OCI-LY7 (cell line): ENCODE measurements at regions of chr22 and their contacts with region 1.

Region 1: DNA sequence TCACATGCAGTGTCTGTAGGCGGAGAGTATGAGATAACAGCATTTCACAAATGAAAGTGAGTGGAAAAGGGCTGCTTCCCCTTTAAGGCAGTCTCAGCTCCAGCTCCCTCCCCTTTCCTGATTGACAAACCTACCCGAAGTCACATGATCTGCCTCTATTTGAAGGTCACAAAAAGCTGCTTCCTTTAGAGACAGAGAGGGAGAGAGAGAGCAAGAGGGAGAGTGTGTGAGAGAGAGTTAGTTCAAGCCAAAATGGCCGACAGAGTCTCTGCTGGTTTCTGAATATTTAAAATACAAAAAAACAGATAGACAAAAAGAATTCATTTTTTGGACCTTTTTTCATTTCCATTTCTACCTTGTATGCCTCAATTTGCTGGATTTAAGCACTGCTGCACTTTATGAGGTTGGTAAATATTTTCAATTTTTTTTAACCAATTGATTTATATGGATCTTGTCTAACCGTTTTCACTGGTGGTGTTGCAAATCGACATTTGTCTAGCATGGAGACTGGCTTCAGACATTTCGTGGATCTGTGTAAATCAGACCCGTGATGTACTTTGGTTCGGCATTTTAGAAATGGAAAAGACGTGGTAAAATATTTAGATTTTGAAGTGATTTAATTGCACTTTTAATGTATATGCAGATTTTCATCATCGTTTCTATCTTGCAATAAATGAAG is at the start of gene TNRC6B:
- DNase-seq: peak; percentile 96
- H3K4me3 ChIP-seq: peak within 1 kb of the TSS; percentile 91
- H3K27ac ChIP-seq: peak within 1 kb of the TSS; percentile 94
- H3K4me1 ChIP-seq: peaks cover 40% of the 10 kb centered on the region
- CTCF ChIP-seq: no peak
- total RNA-seq, gene TNRC6B: 28.4 and 37.0 TPM in 2 replicates

Region 2: DNA sequence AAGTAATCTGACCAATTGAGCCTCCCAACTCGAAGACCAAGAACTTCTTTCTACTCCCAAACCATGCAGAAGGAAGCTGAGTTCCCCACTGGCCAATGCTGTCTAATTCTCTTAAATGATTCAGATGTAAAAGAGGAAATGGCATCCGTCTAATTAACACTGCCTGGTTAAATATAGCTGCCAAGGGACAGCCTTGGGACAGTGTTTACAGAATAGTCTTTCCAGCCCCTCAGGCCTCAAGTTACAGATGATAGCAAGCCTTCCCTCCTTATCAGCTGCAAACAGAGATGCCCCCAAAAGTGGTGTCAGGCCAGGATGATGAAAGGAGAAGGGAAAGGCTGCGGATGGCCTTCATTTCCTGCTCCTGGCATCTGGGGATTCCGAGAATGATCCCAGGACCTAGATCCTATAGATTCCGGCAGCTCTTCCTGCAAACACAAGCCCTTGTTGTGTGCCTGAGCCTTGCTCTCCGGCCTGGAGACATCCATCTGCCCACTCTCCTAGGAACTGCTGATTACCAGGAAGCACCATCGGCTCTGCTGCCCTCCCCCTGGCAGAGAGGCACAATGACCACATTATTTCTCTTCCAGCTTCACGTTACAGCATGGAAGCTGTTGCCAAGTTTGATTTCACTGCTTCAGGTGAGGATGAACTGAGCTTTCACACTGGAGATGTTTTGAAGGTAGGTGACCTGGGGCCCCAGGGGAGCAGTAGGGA is 231.2 kb before region 1 on chr22:
- CTCF ChIA-PET with region 1: no interaction called
- POLR2A ChIA-PET with region 1: no interaction called
- intact Hi-C with region 1: no loop called
- DNase-seq: peak; percentile 34
- H3K4me3 ChIP-seq: peak overlapping the region; percentile 13
- H3K27ac ChIP-seq: peak overlapping the region; percentile 15
- H3K4me1 ChIP-seq: peaks cover 55% of the 10 kb centered on the region
- CTCF ChIP-seq: no peak

Region 3: DNA sequence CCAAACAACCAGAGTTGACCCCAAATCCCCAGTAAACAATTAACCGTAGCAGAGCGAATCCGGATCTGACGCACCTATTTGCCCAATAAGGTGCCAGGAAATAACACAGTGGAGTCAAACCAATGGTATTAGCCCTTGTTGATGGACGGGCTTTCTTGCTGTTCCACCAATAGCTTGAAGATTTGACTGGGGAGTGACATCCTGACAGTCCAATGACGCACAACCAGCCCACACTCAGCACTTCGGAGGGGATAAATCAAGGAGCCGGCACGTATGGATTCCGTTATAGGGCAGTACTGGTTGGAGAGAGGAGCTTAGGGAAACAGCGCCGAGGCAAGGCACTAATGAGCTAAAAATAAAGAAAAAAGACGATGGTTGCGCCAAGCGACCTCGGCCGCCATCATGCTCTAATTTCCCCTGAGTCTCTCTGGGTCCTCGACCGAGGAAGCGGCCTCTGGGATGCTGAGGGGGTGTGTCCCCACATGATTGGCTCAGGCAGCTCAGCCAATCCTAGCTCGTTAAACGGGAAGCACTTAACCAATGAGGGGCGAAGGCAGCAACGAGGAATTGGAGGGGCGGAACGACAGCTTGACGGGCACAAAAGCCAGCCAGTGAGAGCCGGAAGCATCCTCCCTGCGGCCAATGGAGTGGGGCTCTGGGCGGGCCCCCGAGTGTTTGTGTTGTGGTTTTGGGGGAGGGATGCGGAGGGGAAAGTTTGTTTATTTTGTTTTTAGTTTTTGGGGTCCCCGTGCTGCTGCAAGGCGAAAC is 133.6 kb before region 1 on chr22:
- CTCF ChIA-PET with region 1: no interaction called
- POLR2A ChIA-PET with region 1: interaction called, 10 read pairs
- intact Hi-C with region 1: loop called (anchors 1 kb)
- DNase-seq: peak; percentile 100
- H3K4me3 ChIP-seq: peak overlapping the region; percentile 70
- H3K27ac ChIP-seq: peak overlapping the region; percentile 65
- H3K4me1 ChIP-seq: peaks cover 42% of the 10 kb centered on the region
- CTCF ChIP-seq: no peak

Region 4: GRCh38 chr22:40050258-40050657 is 127.6 kb before region 1 on chr22:
- CTCF ChIA-PET with region 1: no interaction called
- POLR2A ChIA-PET with region 1: interaction called, 5 read pairs
- intact Hi-C with region 1: loop called (anchors 1 kb)
- DNase-seq: peak; percentile 96
- H3K4me3 ChIP-seq: peak overlapping the region; percentile 52
- H3K27ac ChIP-seq: peak overlapping the region; percentile 95
- H3K4me1 ChIP-seq: peaks cover 86% of the 10 kb centered on the region
- CTCF ChIP-seq: no peak

Region 5: DNA sequence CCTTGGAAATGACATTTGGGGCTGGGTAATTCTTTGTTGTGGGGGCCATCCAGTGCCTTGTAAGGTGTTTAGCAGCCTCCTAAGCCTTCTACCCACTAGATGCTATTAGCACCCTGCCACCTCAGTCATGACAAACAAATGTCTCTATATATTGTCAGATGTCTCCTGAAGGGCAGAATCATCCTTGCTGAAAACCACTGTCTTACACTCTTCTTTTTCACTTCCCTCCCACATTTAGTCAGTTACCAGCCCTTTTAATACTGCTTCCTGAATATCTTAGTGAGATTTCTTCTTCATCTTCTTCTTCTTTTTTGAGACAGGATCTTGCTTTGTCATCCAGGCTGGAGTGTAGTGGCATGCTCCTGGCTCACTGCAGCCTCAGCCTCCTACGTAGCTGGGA is 32.9 kb after region 1 on chr22:
- CTCF ChIA-PET with region 1: no interaction called
- POLR2A ChIA-PET with region 1: interaction called, 3 read pairs
- intact Hi-C with region 1: loop called (anchors 5 kb)
- DNase-seq: peak; percentile 83
- H3K4me3 ChIP-seq: peak overlapping the region; percentile 42
- H3K27ac ChIP-seq: peak overlapping the region; percentile 81
- H3K4me1 ChIP-seq: peaks cover 76% of the 10 kb centered on the region
- CTCF ChIP-seq: peak; percentile 30; the same call in 1 of the 2 replicates

Region 6: GRCh38 chr22:40346178-40347118 is 168.6 kb after region 1 on chr22 and contains the start of gene ADSL:
- CTCF ChIA-PET with region 1: no interaction called
- POLR2A ChIA-PET with region 1: interaction called, 3 read pairs
- intact Hi-C with region 1: loop called (anchors 1 kb)
- DNase-seq: peak; percentile 91
- H3K4me3 ChIP-seq: peak within 1 kb of the TSS; percentile 80
- H3K27ac ChIP-seq: peak within 1 kb of the TSS; percentile 96
- H3K4me1 ChIP-seq: peaks cover 29% of the 10 kb centered on the region
- CTCF ChIP-seq: no peak
- total RNA-seq, gene ADSL: 117 and 141 TPM in 2 replicates